ENCODE measurements at regions of chr1 and their contacts with region 1.

Region 1: DNA sequence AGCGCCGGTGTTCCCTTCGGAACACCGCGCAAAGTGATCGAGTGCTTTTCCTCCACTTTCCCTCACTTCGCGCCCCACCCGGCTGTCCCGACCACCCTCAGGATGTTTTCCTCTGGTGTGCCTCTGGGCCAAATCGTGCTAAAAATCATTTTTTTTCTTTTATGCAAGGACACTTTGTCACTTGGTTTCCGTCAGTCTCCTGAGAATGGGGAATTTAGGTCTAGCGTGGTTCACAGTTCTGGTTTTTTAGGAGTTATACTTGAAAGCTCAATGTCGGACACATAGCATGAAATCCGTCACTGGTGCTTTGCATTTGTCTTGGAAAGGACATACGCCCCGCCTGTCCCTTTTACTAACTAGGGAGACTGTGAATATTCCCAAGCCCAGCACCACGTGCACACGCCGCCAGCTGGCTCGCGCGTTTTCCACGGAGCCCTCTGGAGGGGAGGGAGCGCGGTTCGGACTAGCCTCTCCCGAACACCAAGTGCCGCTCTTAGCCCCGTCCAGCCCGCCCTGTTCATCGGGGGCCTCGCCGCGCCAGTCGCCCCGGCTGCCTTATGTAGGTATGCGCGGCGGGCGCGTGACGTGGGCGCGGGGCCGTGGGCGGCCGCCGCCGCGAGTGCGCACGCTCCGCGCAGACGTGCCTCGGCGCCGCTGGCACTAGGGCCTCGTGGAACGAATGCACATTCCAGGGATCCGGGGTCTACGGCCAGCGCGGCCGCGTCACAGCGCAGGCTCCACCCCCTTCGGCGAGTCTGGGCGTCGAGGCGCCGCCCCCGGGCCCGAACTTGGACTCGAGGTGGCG is 572 bp upstream of the IRF2BP2 start:
- DNase-seq: peak; percentile 96 to 98 (median 97)
- ATAC-seq: peak; percentile 69
- H3K4me3 ChIP-seq: peak overlapping the region; percentile 26
- H3K4me1 ChIP-seq: peaks cover 35% of the 10 kb centered on the region
- CTCF ChIP-seq: no peak

Region 2: GRCh38 chr1:234440348-234440747 is 170.2 kb before region 1 on chr1:
- intact Hi-C with region 1: no loop called
- DNase-seq: no peak
- ATAC-seq: no peak
- H3K4me3 ChIP-seq: no peak overlapping the region
- H3K4me1 ChIP-seq: no peaks in the 10 kb centered on the region
- CTCF ChIP-seq: no peak

Region 3: DNA sequence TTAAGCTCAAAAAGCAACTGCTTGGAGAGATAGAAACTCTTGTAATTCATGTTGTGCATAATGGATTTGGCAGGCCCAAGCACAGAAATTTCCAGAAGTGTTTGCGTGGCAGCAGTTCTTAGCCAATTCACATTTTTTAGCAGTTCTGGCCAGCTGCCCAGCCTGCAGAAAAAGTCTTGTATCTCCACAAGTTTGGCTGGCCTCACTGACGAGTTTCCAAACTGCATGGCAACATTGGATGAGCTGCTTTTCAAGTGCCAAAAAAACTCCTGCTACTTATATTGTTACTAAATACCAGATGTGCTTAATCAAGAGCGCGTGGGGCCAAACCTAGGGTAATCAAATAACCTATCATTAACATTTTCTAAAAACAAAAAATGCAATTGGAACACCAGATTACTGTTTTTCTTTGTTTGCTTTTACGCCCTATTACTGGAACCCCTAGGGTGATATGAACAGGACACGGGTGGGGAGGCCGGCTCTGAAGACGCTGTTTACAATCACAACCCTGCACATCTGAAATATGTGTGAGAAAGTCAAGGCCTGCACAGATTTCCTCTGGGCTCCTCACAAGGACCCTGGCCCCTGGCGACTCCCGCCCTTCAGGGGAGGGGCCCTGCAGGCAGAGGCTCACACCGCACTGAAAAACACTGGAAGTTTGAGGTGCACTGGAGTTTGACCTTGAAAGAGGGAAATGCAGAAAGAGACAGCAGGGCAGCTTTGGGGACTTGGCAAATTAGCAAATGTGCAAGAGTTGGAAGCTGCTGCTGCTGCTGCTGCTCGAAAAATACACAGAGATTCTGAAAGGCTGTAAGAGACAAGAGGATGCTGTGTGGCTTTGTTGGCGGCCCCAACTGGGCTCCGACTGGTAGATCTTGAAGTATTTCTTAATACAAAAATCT is 76.3 kb before region 1 on chr1:
- intact Hi-C with region 1: loop called in 1 of 2 experiments (anchors 5 kb)
- DNase-seq: peak; percentile 72 to 81 (median 79)
- ATAC-seq: no peak
- H3K4me3 ChIP-seq: no peak overlapping the region
- H3K4me1 ChIP-seq: peaks cover 43% of the 10 kb centered on the region
- CTCF ChIP-seq: no peak

Region 4: DNA sequence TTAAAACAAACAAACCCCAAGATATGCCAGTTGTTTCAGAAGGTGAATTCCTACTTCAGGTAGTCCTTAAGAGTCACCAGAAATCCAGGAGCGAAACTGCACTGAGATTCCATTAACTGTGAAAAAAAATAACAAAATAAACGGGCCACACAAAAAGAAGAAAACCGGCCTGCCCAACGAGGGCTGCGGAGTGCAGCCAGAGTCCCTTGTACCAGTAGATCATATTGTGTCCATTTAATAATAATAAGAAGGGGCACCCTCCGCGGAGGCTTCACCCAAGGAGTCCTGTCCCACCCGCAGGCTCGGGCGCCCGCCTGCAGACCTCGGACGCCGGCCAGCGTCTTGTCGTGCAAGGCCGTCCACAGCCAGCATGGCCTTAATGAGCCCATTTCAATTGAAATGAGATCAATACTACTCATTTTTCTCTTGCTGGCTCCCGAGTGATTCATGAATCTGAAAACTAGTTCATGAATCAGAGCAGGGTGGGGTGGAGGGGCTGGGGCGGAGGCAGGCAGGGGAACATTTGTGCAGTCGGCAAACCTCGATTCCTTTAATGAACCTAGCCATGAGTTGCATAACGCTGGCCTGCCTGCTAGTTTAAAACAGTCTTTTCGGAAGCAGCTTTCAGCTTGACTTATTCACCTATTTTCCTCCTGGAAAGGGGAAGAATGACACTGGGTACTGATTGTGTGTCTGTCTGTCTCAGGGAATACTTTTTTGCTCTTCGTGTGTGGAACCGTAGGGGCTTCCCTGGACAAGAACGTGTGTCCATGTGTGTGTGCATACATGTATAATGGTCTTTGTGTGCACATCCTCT is 112.6 kb after region 1 on chr1:
- intact Hi-C with region 1: loop called (anchors 5 kb)
- DNase-seq: peak; percentile 55 to 75 (median 60)
- ATAC-seq: peak; percentile 27
- H3K4me3 ChIP-seq: no peak overlapping the region
- H3K4me1 ChIP-seq: peaks cover 69% of the 10 kb centered on the region
- CTCF ChIP-seq: no peak

Region 5: GRCh38 chr1:234963180-234963903 is 352.8 kb after region 1 on chr1:
- intact Hi-C with region 1: loop called in 1 of 2 experiments (anchors 5 kb)
- DNase-seq: peak; percentile 85 to 95 (median 91)
- ATAC-seq: peak; percentile 38
- H3K4me3 ChIP-seq: no peak overlapping the region
- H3K4me1 ChIP-seq: peaks cover 67% of the 10 kb centered on the region
- CTCF ChIP-seq: peak; percentile 6